Head of caudate nucleus (tissue), 42 donors: ENCODE measurements at regions of chr10 and their contacts with region 1.

Region 1: DNA sequence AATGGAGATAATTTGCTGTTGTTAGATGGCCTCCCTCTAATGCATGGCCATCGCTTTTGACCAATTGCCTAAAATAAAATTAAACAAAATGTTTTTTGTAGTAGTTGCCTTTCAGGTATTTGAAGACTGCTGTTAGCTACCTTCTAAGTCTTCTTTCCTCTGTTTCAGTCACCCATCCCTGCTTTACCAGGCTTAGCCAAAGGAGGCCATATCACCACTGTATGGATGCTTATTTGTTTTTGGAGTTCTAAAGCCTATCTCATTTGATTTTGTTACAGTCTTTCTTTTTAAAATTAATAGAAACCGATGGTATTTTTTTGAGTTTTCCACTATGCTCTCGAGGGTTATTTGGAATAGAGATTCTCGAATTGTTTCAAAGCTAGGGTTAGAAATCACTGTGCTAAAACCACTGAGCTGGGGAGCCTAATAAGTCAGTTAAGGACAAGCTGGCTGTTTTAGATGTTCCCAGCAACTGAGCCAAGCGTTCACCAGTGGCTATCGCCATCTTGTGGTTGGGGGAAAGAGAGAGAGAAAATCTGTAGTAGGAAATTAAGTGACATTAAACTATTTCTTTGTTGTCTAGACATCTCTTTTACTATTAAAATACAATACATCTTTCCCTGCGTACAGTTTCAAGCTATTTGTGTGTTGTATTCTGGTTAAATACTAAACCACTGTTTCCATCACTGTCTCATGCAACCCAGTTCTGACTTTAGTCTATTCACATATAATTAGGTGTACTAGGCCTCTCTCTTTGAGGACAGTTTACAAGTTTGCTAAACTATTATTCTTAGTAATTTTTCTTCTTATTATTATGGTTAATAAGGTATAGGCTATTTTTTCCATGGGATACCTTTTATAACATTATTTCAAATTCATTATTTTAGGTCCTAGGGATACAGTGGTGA is 52.2 kb downstream of the GPR158 start:
- DNase-seq: peak in 41 of 42 donors; percentile 17 to 84 (median 62)

Region 2: DNA sequence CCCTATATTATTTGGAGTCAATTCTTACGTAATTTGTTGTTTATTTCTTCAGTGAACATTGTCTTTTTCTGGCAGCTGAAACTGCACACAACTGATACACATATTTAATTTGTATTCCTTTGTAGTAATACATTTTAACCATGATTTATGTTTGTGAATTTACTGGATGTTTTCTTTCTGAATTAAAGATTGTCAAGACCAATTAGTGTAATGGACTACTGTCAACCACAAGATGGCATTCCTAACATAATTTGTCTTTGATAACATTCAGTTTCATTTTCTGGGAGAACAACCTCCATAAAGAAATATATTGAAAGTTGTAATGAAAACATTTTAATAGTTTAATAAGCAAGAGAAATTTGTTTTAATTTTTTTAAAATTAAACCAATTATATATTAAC is 200.6 kb before region 1 on chr10:
- intact Hi-C with region 1: loop called (anchors 10 kb)
- DNase-seq: no peak

Region 3: GRCh38 chr10:25142116-25142864 is 84.7 kb before region 1 on chr10:
- intact Hi-C with region 1: no loop called
- DNase-seq: no peak

Region 4: GRCh38 chr10:25174461-25175230 is 52.4 kb before region 1 on chr10 and contains the start of gene GPR158:
- intact Hi-C with region 1: loop called (anchors 5 kb)
- DNase-seq: peak; percentile 86 to 97 (median 94)